AG04450 (cell line): ENCODE measurements at regions of chr12 and their contacts with region 1.

Region 1: GRCh38 chr12:19158923-19159322 is 29.4 kb downstream of the PLEKHA5 start:
- DNase-seq: peak; percentile 55
- H3K4me3 ChIP-seq: no peak overlapping the region
- H3K27ac ChIP-seq: no peak overlapping the region
- H3K27me3 ChIP-seq: no peaks in the 10 kb centered on the region
- CTCF ChIP-seq: no peak

Region 2: DNA sequence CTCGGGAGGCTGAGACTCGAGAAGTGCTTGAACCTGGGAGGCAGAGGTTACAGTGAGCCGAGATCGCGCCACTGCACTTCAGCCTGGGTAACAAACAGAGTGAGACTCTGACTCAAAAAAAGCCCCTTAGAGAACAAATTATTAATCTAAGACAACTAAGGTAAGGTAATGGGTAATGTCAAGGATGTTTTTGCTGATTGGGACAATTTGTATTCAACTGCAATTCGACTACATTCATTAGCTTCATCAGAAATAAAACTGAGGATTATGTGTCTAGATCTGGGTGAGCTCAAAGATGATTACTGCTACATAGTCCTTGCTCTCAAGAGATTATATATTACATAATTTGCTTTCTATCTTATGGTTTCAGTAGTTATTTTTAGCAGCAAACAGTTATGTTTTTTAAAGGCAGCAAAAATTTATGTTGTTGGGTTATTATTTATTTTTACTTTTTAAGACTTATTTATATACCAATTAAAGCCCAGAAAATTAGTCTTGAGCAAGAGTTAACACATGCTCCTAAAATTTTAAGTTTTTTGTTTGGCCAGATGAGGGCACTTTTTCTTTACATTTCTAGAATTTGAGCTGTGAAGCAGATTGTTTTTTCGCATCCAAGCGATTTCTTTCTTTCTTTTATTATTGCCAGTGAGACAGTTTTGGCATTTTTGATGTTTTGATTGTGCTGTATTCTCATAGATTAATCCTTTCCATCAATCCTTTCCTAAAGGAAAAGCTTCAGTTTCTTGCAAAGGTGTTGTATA is 22.9 kb after region 1 on chr12:
- CTCF ChIA-PET with region 1: interaction called, 11 read pairs
- POLR2A ChIA-PET with region 1: no interaction called
- DNase-seq: no peak
- H3K4me3 ChIP-seq: no peak overlapping the region
- H3K27ac ChIP-seq: no peak overlapping the region
- H3K27me3 ChIP-seq: no peaks in the 10 kb centered on the region
- CTCF ChIP-seq: 0 out of 2 replicates have a peak, but pooled peaks have one; percentile 27

Region 3: DNA sequence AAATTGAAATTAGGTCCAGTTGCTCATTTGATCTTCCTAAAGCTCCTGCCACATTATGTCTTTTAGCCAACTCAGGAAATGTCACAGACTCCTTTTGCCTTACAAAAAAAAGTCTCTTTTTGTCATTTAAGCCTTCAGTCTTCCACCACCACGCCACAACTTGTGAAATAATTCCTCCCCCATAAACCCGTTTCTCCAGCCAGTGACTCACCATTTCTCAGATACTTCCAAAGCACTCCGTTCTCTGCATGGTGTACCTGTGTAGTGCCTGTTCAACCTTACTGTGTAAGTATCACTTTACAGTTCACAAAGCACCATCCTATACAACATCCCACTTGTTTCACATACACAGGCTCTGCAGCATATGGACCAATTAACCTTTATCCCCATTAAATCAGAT is 140.8 kb after region 1 on chr12:
- CTCF ChIA-PET with region 1: no interaction called
- POLR2A ChIA-PET with region 1: no interaction called
- DNase-seq: no peak
- H3K4me3 ChIP-seq: no peak overlapping the region
- H3K27ac ChIP-seq: no peak overlapping the region
- H3K27me3 ChIP-seq: no peaks in the 10 kb centered on the region
- CTCF ChIP-seq: no peak